Right ventricle myocardium inferior (tissue), 1 donor: ENCODE measurements at regions of chr2 and their contacts with region 1.

Region 1: GRCh38 chr2:239035361-239036078 is 187.6 kb downstream of the TWIST2 start:
- DNase-seq: peak; percentile 84
- ATAC-seq: peak; percentile 79

Region 2: DNA sequence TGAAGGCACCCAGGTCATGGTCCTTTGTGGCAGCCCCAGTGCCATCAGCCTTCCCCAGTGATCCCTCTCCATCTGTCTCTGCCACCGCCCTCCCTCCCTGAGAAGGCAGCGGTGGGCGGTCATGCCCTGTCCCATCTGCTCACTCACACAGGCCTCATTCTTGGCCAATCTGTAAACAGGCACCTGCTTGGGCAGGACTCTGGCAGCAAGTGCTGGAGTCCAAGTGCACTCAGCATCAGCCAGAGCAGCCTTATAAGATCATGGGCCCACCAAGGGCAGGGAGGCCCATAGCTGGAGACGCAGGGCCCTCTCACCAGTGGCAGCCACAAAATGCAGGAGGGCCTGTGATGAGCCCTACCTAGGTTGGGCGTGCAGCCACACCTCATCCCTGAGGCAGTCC is 46.8 kb before region 1 on chr2:
- intact Hi-C with region 1: no loop called
- DNase-seq: no peak
- ATAC-seq: no peak

Region 3: GRCh38 chr2:239106314-239106908 is 70.9 kb after region 1 on chr2:
- intact Hi-C with region 1: loop called (anchors 1 kb)
- DNase-seq: no peak
- ATAC-seq: peak; percentile 55

Region 4: DNA sequence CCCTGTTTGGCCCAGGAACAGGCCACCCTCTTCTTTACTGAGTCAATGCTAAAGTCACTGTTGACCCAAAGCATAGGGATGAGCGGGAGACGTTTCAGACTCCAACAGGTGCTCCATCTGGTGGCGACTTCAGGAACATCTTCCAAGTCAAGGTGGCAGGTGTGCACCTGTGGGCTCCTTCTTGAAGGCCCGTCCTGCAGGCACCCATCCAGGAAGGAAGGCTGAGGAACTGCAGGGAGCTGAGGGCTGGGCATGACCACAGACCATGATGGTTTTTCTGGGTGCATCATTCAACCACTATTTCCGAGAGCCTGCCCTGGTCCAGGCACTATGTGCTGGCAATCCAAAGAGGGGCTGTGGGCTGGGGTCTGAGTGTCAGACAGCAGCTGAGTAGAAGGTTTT is 846.8 kb after region 1 on chr2:
- intact Hi-C with region 1: loop called (anchors 5 kb)
- DNase-seq: peak; percentile 43
- ATAC-seq: no peak

Region 5: DNA sequence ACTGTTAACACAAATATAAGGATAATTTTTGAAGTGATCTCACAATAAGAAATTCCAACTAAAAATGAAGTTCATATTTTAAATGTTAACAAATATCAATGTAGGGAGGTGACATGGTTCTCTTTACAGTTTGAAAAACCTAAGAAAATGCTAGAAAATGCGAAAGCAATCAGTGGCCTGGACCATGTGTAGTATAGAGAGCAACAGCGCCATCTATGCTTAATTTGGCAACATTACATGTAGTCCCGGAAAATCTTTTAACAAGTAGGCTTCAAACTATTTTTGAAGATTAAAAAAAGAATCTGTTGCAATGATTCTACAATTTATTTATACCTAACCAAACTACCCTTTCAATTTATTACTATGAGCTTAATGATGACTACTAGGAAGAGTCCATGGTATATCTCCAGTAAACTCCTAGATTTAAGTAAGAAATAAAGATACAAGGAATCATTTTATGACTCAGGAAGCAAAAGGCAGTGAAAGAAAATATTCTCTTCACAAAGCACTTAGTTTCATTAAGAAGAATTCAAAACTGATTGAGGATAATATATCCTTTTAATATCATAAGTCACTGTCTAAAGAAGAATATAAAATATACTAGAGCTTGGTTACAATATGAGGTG is 956.3 kb after region 1 on chr2:
- intact Hi-C with region 1: loop called (anchors 5 kb)
- DNase-seq: no peak
- ATAC-seq: peak; percentile 52